ENCODE measurements at regions of chr9 and their contacts with region 1.

Region 1: GRCh38 chr9:33315371-33315770 is 25.1 kb downstream of the NFX1 start:
- DNase-seq: no peak
- H3K4me3 ChIP-seq: no peak overlapping the region
- H3K4me1 ChIP-seq: no peaks in the 10 kb centered on the region
- H3K27me3 ChIP-seq: no peaks in the 10 kb centered on the region

Region 2: DNA sequence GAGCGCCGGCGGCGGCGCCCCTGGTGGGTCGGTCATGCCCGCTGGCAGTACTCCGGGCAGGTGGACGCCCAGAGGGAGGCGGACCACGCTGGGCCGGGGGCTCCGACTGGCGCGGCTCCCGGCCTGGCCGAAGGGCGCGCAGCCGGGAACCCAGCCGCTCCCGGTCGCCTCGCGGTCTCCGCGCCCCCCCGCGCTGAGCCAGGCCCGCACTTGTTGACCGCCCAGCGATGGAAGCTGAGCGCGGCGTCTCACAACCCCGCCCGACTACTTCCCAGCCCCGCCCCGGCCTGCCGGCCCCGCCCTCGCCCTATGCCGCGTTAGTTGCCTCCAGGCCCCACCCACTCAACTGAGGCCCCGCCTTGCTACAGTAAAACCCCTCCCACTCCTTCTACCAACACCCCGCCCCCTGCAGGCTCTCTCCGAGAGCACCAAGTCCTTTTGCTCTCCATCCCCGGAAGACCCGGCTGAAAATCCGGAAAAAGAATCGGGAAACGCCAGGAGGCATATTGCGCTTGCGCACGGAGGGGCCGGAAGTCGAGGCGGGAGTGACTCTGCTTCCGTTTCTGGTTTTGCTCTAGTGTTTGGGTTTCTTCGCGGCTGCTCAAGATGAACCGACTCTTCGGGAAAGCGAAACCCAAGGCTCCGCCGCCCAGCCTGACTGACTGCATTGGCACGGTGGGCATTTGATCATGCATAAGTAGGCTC is 50.7 kb before region 1 on chr9 and contains the starts of genes BAG1 and CHMP5:
- in situ Hi-C with region 1: loop called (anchors 5 kb)
- DNase-seq: peak; percentile 98 to 100
- H3K4me3 ChIP-seq: peak within 1 kb of the TSS; percentile 90
- H3K4me1 ChIP-seq: peaks cover 10% of the 10 kb centered on the region
- H3K27me3 ChIP-seq: no peaks in the 10 kb centered on the region

Measured in HAP-1 (cell line).